SK-N-SH (cell line): ENCODE measurements at regions of chr2 and their contacts with region 1.

Region 1: DNA sequence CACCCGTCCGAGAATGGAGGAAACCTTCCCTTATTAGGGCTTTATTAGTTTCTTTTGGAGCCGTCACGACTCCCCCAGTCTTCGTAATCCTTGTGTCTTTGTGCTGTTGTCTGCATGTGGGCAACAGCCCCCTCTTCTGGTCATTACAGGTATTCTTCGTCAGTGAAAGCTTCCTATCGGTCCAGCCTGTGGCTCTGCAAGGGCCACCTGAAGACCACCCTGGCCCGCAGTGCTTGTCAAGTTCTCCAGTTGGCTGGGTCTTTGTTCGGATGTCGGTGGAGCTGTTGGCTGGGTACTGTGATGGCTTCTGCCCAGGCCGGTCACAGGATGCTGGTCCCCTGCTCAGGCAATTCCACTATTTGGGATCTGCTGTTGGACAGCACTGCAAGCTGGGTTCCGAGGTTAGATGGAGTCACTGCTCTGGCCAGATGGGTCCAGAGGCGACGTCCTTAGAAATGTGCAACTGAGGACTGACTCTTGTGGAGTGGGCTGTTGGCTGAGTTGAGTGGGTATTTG is 19.2 kb downstream of the E2F6 start:
- DNase-seq: peak; percentile 72
- H3K4me3 ChIP-seq: no peak overlapping the region; a peak in 1 of 4 replicates
- H3K27ac ChIP-seq: no peak overlapping the region
- H3K4me1 ChIP-seq: peaks cover 0 to 9% of the 10 kb centered on the region in 2 experiments; a peak in 1 of 4 replicates
- H3K27me3 ChIP-seq: no peaks in the 10 kb centered on the region
- CTCF ChIP-seq: peak; percentile 95
- EP300 ChIP-seq: no peak
- RAD21 ChIP-seq: peak; percentile 85

Region 2: DNA sequence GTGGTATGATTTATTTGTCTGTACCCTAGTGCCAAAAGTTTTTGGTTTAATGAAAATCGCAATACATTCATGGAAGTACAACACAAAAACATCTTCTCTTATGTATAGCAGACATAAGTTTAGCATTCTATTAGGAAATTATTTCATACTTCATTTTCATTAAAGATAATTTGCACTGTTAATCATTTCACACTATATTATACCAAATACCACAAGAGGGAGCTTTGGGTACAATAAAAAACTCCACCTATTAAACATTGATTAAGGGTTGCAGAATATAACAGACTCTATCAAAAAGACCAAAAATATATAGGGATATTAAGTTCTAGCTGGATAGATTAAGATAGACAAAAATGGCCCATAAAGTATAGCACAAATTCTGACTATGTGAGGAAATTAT is 212.5 kb before region 1 on chr2:
- CTCF ChIA-PET with region 1: interaction called, 21 read pairs
- POLR2A ChIA-PET with region 1: no interaction called
- DNase-seq: peak; percentile 31
- H3K4me3 ChIP-seq: no peak overlapping the region
- H3K27ac ChIP-seq: no peak overlapping the region
- H3K4me1 ChIP-seq: no peaks in the 10 kb centered on the region
- H3K27me3 ChIP-seq: no peaks in the 10 kb centered on the region
- CTCF ChIP-seq: peak; percentile 82
- EP300 ChIP-seq: no peak
- RAD21 ChIP-seq: peak; percentile 76

Region 3: DNA sequence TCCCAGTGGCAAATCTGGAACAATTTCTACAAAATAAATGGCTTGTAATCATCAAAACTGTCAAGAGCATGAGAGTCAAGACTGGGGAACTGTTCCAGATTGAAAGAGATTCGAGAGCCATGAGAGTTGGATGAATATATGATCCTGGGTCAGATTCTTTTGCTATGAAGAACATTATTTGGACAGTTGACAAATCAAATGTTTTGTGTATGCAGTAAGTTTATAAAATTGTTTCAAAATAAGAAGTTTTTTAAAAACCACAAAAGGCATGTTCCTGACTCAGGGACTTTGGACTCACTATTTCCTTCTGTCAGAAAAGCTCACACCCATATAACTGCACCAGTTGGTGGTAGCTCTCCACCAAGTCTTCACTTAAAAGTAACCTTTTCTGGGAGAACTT is 140.8 kb before region 1 on chr2:
- CTCF ChIA-PET with region 1: no interaction called
- POLR2A ChIA-PET with region 1: no interaction called
- DNase-seq: no peak
- H3K4me3 ChIP-seq: no peak overlapping the region
- H3K27ac ChIP-seq: peak overlapping the region in 1 of 2 experiments; percentile 54; a peak in 2 of 4 replicates
- H3K4me1 ChIP-seq: peaks cover 12 to 37% of the 10 kb centered on the region in 2 experiments; a peak in 3 of 4 replicates
- H3K27me3 ChIP-seq: no peaks in the 10 kb centered on the region
- CTCF ChIP-seq: no peak
- EP300 ChIP-seq: 0 out of 4 replicates have a peak, but pooled peaks of 1 of the 2 experiments have one; percentile 26
- RAD21 ChIP-seq: no peak

Region 4: DNA sequence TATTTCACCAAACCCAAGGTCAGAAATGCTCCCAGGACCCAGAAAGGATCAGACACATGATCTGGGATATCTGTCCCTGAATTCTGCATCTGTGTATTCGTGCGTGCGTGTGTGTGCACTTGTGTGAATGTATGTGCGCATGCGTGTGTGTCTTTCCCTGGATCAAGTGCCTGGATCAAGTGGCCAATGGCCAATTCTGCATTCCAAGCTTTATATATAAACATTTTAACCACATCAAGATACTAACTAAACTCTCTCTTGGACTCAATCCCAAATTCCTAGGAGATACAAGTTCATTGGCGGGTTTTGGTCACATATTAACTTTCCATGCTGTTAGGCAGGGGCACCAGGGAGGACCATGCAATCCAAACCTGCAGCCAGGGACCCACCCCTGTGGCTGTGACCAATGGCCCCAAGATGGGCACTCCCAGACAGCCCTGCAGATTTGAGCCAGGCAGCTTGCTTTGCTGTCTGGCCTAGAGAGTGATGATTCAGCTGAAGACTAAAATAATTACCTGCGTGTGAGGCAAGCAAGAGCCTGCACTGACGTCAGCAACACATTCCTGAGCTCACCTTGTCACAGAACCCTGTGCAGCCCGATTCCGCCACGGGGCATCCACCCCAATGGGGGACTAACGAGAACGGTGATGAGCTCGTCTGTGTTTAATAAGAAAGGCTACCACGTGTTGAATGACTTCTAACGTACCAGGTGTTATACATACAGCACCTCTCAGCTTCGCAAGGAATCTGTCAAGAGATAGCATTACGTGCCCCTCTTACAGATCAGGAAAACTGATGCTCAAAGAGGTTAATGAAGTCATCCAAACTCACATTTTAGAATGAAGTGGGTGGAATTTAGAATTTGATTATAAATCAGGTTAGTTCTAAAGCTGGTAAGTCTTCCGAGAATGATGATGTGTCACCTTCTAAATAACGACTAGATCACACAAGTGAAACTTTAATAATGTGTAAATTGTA is 57.0 kb before region 1 on chr2:
- CTCF ChIA-PET with region 1: interaction called, 10 read pairs
- POLR2A ChIA-PET with region 1: no interaction called
- DNase-seq: no peak
- H3K4me3 ChIP-seq: no peak overlapping the region
- H3K27ac ChIP-seq: no peak overlapping the region
- H3K4me1 ChIP-seq: peaks cover 21 to 27% of the 10 kb centered on the region in 2 experiments; a peak in 3 of 4 replicates
- H3K27me3 ChIP-seq: no peaks in the 10 kb centered on the region
- CTCF ChIP-seq: no peak
- EP300 ChIP-seq: no peak
- RAD21 ChIP-seq: no peak

Region 5: DNA sequence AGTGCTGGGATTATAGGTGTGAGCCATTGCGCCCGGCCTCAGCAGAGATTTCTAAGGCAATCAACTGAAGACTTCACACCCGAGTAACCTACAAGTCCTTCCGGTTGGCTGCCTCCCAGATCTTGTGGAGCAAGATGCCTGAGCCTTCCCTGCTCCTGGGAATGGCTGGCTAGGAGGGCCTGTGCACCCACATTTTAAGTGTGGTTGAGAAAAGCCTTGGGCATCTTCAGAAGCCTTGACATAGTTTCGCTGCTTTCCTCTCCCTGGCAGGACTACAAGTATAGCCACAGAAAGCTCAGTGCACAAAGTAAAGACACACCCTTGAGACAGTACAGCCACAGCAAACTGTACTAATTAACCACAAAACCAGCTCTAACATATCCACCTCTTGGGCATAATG is 16.1 kb before region 1 on chr2:
- CTCF ChIA-PET with region 1: interaction called, 19 read pairs
- POLR2A ChIA-PET with region 1: no interaction called
- DNase-seq: no peak
- H3K4me3 ChIP-seq: no peak overlapping the region
- H3K27ac ChIP-seq: no peak overlapping the region
- H3K4me1 ChIP-seq: peaks cover 0 to 2% of the 10 kb centered on the region in 2 experiments; a peak in 1 of 4 replicates
- H3K27me3 ChIP-seq: no peaks in the 10 kb centered on the region
- CTCF ChIP-seq: no peak
- EP300 ChIP-seq: no peak
- RAD21 ChIP-seq: no peak

Region 6: DNA sequence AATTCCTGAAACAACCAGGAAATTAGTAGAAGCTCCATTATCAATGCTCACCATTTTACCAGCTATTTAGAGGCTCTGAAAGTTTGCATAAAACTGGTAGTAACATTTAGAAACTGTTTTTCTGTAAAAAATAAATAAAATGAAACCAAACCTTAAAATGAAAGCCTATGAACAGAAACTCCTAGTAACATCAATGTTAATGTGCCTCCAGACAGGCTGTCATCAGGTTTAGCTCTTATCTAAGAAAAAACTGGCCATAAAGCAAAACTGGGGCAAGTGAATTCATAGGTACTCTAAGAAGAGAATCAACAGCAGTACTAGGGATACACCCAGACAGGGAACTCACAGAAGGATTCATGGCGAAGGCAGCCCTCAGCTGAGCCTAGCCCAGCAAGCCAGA is 11.1 kb after region 1 on chr2:
- CTCF ChIA-PET with region 1: interaction called, 41 read pairs
- POLR2A ChIA-PET with region 1: no interaction called
- DNase-seq: no peak
- H3K4me3 ChIP-seq: no peak overlapping the region
- H3K27ac ChIP-seq: peak overlapping the region in 1 of 2 experiments; percentile 17; a peak in 1 of 4 replicates
- H3K4me1 ChIP-seq: peaks cover under 1 to 8% of the 10 kb centered on the region in 2 experiments; a peak in 2 of 4 replicates
- H3K27me3 ChIP-seq: no peaks in the 10 kb centered on the region
- CTCF ChIP-seq: no peak
- EP300 ChIP-seq: no peak
- RAD21 ChIP-seq: no peak

Region 7: DNA sequence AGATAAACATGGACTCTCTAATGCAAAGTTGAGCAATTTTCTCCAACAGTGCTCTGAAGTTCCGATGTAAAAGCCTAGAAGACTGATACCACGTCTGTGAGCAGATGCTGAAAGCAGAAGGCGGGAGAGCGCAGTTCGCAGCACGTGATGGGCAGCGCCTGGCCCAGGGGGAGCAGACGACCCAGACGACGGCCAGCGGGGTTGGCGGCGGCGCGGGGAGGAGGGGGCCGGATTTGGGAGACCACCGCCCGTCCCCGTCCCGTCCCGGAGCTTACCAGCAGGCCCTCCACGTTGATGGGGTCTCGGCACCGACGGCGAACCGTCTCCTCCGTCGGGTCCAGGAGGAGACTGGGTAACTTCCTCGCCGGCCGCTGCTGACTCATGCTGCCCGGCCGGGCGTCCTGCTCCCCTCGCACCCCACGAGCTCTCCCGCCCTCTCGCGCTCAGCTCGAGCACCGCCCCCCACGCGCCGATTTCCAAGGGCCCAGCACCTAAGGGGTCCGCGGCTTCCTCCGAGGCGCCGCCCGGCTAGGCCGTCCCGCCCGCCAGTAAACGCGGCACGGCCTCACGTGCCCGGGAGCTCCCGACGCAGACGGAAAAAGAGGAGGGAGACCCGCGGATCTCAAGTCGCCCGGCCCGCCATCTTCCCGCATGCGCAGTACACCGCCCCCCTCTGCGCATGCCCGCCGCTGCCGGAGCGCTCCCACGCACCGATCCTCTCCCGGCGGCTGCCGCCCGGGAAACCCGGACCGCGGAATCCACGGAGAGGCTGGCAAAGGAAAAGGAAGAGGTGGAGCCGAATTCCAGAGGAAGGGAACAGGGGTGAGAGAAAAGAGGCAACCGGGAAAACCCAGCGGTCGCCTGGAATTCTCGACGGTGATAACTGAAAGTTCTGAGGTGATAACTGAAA is 19.0 kb after region 1 on chr2 and contains the start of gene E2F6:
- CTCF ChIA-PET with region 1: interaction called, 41 read pairs
- POLR2A ChIA-PET with region 1: no interaction called
- DNase-seq: peak; percentile 98
- H3K4me3 ChIP-seq: peak within 1 kb of the TSS; percentile 64 to 72
- H3K27ac ChIP-seq: peak within 1 kb of the TSS; percentile 86 to 90
- H3K4me1 ChIP-seq: peaks cover 16 to 27% of the 10 kb centered on the region in 2 experiments
- H3K27me3 ChIP-seq: no peaks in the 10 kb centered on the region
- CTCF ChIP-seq: no peak
- EP300 ChIP-seq: peak; percentile 48 to 72
- RAD21 ChIP-seq: no peak
- polyA plus RNA-seq, gene E2F6: 15.3 and 19.7 TPM in 2 replicates

Region 8: GRCh38 chr2:11743846-11744553 is 297.2 kb after region 1 on chr2:
- CTCF ChIA-PET with region 1: no interaction called
- POLR2A ChIA-PET with region 1: no interaction called
- DNase-seq: peak; percentile 94
- H3K4me3 ChIP-seq: peak overlapping the region; percentile 30 to 54
- H3K27ac ChIP-seq: peak overlapping the region; percentile 60 to 81
- H3K4me1 ChIP-seq: peaks cover 22 to 47% of the 10 kb centered on the region in 2 experiments
- H3K27me3 ChIP-seq: no peaks in the 10 kb centered on the region
- CTCF ChIP-seq: no peak
- EP300 ChIP-seq: peak; percentile 72 to 74; a peak in 2 of 4 replicates
- RAD21 ChIP-seq: peak; percentile 46